Activated CD4-positive, alpha-beta T cell treated with anti-CD3 and anti-CD28 coated beads, Interleukin-2, amount 10 ng/mL, durations not matched to agents 24 days and 14 days (primary cell): ENCODE measurements at regions of chr7 and their contacts with region 1.

Region 1: DNA sequence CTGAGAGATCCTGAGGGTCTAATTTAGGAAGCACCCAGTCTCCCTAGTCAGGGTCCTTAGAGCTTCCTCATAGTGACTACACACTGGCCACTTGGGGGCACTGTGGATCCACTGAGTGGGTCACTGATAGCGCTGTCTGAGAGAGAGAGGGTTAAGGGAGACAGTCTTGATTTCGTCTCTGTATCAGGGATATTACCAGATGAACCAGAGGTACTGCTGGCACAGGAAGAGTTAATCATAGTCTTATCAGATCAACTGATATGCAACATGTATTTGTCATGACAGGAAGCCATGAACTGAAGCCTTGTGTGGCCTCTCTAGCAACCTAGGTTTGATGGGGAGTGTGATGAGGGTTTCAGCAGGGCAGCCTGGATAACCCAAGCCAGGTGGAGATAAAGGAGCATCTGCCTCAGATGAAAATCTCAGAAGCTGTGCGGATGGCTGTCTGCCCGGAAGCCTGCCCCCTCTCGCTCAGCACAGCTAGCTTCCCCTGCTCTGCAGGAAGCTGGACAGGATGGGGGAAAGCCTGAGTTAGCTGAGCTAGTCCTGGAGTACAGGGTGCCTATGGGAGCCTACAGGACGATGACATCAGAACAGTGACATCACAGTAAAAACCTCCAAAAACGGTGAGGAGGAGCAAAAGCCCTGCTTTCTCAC is 214.0 kb upstream of the PRSS1 start:
- DNase-seq: peak; percentile 91
- H3K4me3 Mint-ChIP-seq: peak overlapping the region; percentile 74
- H3K27ac Mint-ChIP-seq: peak overlapping the region; percentile 80
- H3K4me1 Mint-ChIP-seq: peaks cover 23% of the 10 kb centered on the region
- H3K27me3 Mint-ChIP-seq: peaks cover 12% of the 10 kb centered on the region

Region 2: DNA sequence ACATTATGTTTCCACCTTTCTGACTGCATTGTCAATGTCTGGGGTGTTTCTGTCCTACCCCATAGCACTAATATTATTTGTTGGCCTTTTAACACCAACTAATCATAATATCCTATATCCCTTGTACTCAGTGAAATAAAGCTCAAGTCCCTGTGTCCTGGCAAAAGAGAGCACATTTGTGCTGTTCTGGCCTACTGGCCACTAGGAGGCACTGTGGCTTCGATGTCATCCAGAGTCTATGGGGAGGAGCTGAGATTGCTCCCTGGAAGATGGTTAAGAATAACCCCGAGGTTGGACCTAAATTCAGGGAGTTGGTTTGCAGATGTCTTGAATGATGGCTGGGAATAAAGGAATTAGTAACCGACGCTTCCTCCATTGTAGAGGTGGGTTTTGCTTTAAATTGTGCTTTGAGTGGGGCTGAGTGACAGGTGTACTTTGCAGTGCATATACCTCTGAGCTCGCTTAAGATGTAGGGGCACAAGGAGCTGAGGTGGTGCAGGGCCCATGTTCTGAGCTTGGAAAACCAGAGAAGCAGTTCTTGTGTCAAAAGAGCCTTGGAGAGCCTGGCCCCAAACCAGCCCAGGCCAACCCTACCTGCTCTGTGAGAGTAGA is 22.8 kb after region 1 on chr7:
- intact Hi-C with region 1: loop called (anchors 1 kb)
- DNase-seq: peak; percentile 86
- H3K4me3 Mint-ChIP-seq: peak overlapping the region; percentile 46
- H3K27ac Mint-ChIP-seq: peak overlapping the region; percentile 0
- H3K4me1 Mint-ChIP-seq: peaks cover 23% of the 10 kb centered on the region
- H3K27me3 Mint-ChIP-seq: peaks cover 9% of the 10 kb centered on the region

Region 3: DNA sequence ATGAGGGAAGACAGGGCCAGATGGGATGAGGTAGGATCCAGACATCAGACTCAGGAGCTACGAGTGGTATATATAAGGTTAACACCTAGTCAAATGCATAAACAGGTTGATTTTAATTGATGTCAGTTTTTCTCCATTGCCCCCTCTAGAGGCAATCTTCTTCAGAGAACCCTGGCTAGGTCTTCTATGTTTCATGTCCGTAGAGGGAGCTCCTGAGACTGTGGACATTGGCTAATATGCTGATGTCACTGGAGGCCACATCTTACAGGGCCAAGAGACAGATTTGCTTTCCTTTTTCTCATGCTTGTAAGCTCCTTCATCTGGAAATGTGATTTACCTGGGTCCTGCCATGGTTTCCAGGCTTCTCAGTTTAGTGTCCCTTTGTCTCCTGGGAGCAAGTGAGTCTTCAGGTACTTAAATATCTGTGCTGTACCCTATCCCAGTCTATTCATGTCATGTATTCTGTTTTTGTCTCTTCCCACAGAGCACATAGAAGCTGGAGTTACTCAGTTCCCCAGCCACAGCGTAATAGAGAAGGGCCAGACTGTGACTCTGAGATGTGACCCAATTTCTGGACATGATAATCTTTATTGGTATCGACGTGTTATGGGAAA is 52.4 kb after region 1 on chr7:
- intact Hi-C with region 1: loop called (anchors 1 kb)
- DNase-seq: peak; percentile 70
- H3K4me3 Mint-ChIP-seq: no peak overlapping the region
- H3K27ac Mint-ChIP-seq: no peak overlapping the region
- H3K4me1 Mint-ChIP-seq: peaks cover 14% of the 10 kb centered on the region
- H3K27me3 Mint-ChIP-seq: no peaks in the 10 kb centered on the region

Region 4: GRCh38 chr7:142603870-142604448 is 68.7 kb after region 1 on chr7:
- intact Hi-C with region 1: loop called (anchors 5 kb)
- DNase-seq: peak; percentile 86
- H3K4me3 Mint-ChIP-seq: peak overlapping the region; percentile 4
- H3K27ac Mint-ChIP-seq: no peak overlapping the region
- H3K4me1 Mint-ChIP-seq: peaks cover 3% of the 10 kb centered on the region
- H3K27me3 Mint-ChIP-seq: peaks cover 10% of the 10 kb centered on the region

Region 5: DNA sequence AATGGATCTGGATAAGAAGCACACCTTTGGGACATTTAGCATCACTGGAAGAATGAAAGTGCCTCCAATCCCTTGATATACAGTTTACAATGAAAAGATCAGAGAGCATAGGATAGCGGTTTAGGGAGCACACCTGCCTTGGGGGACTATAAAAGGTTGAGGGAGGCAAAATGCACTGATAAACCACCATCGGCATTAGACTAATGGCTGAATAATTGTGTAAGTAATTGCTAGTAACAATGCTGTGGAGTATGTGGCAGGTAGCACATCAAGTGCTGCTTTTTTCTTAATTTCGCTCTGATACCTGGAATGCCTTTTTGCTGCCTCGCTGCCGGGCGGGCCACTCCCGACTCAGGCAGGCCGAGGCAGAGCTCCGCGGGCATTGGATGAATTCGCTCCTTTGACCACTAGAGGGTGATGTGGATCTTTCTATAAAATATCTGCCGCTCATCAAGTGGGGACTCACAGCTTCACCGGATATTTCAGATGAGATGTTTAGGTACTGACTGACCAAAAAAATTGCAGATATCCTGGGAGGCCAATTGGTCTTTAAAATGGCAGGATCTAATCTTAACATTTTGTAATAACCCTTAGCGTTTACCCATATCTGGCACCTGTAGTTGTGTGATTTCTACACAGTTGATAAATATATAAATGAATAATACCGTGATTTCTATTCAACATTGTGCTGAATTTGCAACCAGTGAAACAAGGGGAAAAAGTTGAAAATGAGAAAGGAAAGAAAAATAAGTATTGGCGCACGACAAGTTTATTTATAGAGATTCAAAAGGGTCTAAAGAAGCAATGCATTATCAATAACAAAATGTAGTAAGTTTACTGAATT is 97.3 kb after region 1 on chr7:
- intact Hi-C with region 1: loop called (anchors 10 kb)
- DNase-seq: peak; percentile 86
- H3K4me3 Mint-ChIP-seq: no peak overlapping the region
- H3K27ac Mint-ChIP-seq: no peak overlapping the region
- H3K4me1 Mint-ChIP-seq: peaks cover 13% of the 10 kb centered on the region
- H3K27me3 Mint-ChIP-seq: peaks cover 12% of the 10 kb centered on the region

Region 6: GRCh38 chr7:142654398-142654797 is 119.1 kb after region 1 on chr7:
- intact Hi-C with region 1: no loop called
- DNase-seq: no peak
- H3K4me3 Mint-ChIP-seq: no peak overlapping the region
- H3K27ac Mint-ChIP-seq: peak overlapping the region; percentile 6
- H3K4me1 Mint-ChIP-seq: peaks cover 2% of the 10 kb centered on the region
- H3K27me3 Mint-ChIP-seq: peaks cover 27% of the 10 kb centered on the region

Region 7: GRCh38 chr7:143214789-143215679 is 679.8 kb after region 1 on chr7:
- intact Hi-C with region 1: loop called (anchors 10 kb)
- DNase-seq: peak; percentile 91
- H3K4me3 Mint-ChIP-seq: no peak overlapping the region
- H3K27ac Mint-ChIP-seq: no peak overlapping the region
- H3K4me1 Mint-ChIP-seq: no peaks in the 10 kb centered on the region
- H3K27me3 Mint-ChIP-seq: peaks cover 24% of the 10 kb centered on the region